HCT116 (cell line): ENCODE measurements at regions of chr22 and their contacts with region 1.

Region 1: DNA sequence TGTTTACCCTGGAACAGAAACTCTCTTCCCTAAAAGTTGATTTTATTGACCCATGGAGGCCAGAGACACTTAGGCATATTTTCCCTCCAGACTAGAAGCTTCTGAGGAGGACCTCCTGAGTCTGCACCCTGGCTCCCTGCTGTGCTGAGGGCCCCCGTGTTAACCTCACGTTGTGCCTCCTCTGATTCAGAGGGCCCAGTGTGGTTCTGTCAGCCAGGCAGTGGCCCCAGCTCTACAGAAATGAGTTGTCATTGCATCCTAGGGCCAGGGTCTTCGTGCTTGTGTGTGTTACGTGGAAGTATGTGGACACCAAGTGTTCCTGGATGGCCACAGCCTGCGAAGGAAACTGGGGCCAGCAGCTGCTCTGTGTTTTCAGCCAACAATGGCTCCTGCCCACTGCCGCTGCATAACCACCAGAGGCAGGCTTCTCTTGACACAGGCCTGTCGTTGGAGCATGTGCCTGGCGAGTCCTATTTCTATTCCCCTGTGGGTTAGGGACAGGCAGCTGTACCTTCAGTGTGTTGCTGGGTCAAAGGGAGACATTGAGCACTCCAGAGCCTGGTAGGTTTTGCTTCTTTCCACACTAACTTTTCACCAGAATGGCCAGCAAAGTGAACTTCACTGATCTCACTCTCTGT is 44.5 kb downstream of the MED15 start:
- DNase-seq: no peak
- ATAC-seq: 0 out of 2 replicates have a peak, but pooled peaks have one; percentile 38
- H3K4me3 ChIP-seq: no peak overlapping the region
- H3K27ac ChIP-seq: no peak overlapping the region
- H3K4me1 ChIP-seq: no peaks in the 10 kb centered on the region
- H3K27me3 ChIP-seq: no peaks in the 10 kb centered on the region
- CTCF ChIP-seq: peak in 1 of 3 experiments; percentile 29; a peak in 1 of 6 replicates
- POLR2A ChIP-seq: no peak
- RAD21 ChIP-seq: no peak

Region 2: GRCh38 chr22:20563248-20563906 is 11.5 kb after region 1 on chr22:
- CTCF ChIA-PET with region 1: interaction called, 10 read pairs
- POLR2A ChIA-PET with region 1: no interaction called
- RAD21 ChIA-PET with region 1: no interaction called
- intact Hi-C with region 1: no loop called
- DNase-seq: no peak
- ATAC-seq: no peak
- H3K4me3 ChIP-seq: no peak overlapping the region
- H3K27ac ChIP-seq: no peak overlapping the region
- H3K4me1 ChIP-seq: peaks cover 21 to 32% of the 10 kb centered on the region in 2 experiments
- H3K27me3 ChIP-seq: no peaks in the 10 kb centered on the region
- CTCF ChIP-seq: no peak
- POLR2A ChIP-seq: no peak
- RAD21 ChIP-seq: no peak

Region 3: GRCh38 chr22:20671409-20672081 is 119.6 kb after region 1 on chr22:
- CTCF ChIA-PET with region 1: no interaction called
- POLR2A ChIA-PET with region 1: no interaction called
- RAD21 ChIA-PET with region 1: no interaction called
- intact Hi-C with region 1: no loop called
- DNase-seq: no peak
- ATAC-seq: no peak
- H3K4me3 ChIP-seq: no peak overlapping the region
- H3K27ac ChIP-seq: no peak overlapping the region
- H3K4me1 ChIP-seq: no peaks in the 10 kb centered on the region
- H3K27me3 ChIP-seq: no peaks in the 10 kb centered on the region
- CTCF ChIP-seq: no peak
- POLR2A ChIP-seq: no peak
- RAD21 ChIP-seq: no peak